ENCODE measurements at regions of chrX and their contacts with region 1.

Region 1: GRCh38 chrX:71910986-71911730 is 513 bp downstream of the NHSL2 start:
- DNase-seq: peak; percentile 42 to 64
- ATAC-seq: peak; percentile 83 to 93
- H3K4me3 ChIP-seq: peak overlapping the region; percentile 57
- H3K27ac ChIP-seq: peak overlapping the region; percentile 62 to 89; a peak in 4 of 6 replicates
- H3K4me1 ChIP-seq: 0 out of 3 replicates have a peak, but pooled peaks cover 4% of the 10 kb centered on the region
- CTCF ChIP-seq: peak; percentile 43
- EP300 ChIP-seq: no peak
- POLR2A ChIP-seq: no peak; the same call in none of the 2 replicates
- RAD21 ChIP-seq: no peak

Region 2: GRCh38 chrX:71953946-71954345 is 42.8 kb after region 1 on chrX:
- CTCF ChIA-PET with region 1: no interaction called
- POLR2A ChIA-PET with region 1: no interaction called
- DNase-seq: no peak
- ATAC-seq: no peak
- H3K4me3 ChIP-seq: no peak overlapping the region
- H3K27ac ChIP-seq: no peak overlapping the region
- H3K4me1 ChIP-seq: no peaks in the 10 kb centered on the region
- CTCF ChIP-seq: no peak
- EP300 ChIP-seq: no peak
- POLR2A ChIP-seq: no peak
- RAD21 ChIP-seq: no peak

Region 3: DNA sequence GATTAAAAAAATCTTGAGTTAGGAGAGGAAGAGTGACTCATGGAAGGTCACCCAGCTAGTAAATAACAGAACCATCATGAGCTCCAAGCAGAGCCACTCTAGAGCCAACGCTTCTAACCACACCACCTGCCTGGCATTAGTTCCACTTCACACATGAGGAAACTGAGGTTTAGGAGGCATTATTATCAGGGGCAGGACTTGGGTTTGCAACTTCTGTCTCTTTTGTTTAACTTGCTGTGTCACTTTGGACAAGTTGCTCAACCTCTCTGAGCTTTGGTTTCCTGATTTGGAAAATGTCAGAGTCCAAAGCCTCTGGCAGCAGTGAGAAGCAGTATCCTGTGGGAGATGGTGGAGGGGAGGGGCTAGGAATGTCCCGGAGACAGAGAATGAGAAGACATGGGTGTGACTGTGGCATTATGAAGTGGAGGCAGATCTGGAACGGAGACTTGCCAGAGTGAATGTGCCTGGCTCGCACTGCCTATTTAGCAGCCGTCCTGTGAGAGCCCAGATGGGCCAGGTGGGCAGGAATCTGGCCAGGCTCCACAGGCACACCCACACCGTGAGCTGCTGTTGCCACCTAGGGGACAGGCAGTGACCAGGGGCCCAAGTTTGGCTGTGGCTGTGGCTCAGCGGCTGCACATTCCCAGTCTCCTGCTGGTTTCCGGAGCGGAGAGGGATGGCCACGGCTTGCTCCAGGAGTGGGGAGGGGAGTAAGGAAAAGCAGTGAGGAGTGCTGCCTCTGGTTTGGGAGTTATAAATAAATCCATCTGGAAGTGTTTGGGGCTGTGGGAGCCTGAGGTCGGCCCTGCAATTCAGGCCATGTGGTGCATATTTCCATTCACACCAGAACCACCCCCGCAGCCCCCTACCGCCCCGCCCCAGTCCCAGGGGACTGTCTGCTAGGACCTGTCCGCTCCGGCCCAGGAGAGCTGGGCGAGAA is 92.9 kb after region 1 on chrX:
- CTCF ChIA-PET with region 1: interaction called, 31 read pairs
- POLR2A ChIA-PET with region 1: no interaction called
- DNase-seq: peak in 1 of 2 experiments; percentile 39
- ATAC-seq: peak; percentile 90 to 92
- H3K4me3 ChIP-seq: no peak overlapping the region
- H3K27ac ChIP-seq: peak overlapping the region in 1 of 2 experiments; percentile 8; a peak in 1 of 6 replicates
- H3K4me1 ChIP-seq: 0 out of 3 replicates have a peak, but pooled peaks cover 4% of the 10 kb centered on the region
- CTCF ChIP-seq: peak; percentile 30
- EP300 ChIP-seq: no peak
- POLR2A ChIP-seq: no peak
- RAD21 ChIP-seq: peak; percentile 54 to 55